Mammary epithelial cell (primary cell): ENCODE measurements at regions of chr12 and their contacts with region 1.

Region 1: GRCh38 chr12:6825398-6826124 is 2.6 kb upstream of the P3H3 start:
- DNase-seq: peak; percentile 71
- H3K4me3 ChIP-seq: peak overlapping the region in 2 of 3 experiments; percentile 29 to 30
- H3K27ac ChIP-seq: no peak overlapping the region
- H3K4me1 ChIP-seq: peaks cover 22% of the 10 kb centered on the region
- H3K27me3 ChIP-seq: peaks cover 29% of the 10 kb centered on the region
- CTCF ChIP-seq: peak; percentile 80 to 95

Region 2: GRCh38 chr12:6662906-6663742 is 162.4 kb before region 1 on chr12 and contains the start of gene ING4:
- CTCF ChIA-PET with region 1: no interaction called
- dilution Hi-C with region 1: no loop called
- in situ Hi-C with region 1: no loop called
- intact Hi-C with region 1: loop called (anchors 5 kb)
- DNase-seq: peak; percentile 99
- H3K4me3 ChIP-seq: peak within 1 kb of the TSS; percentile 67 to 71 (median 69)
- H3K27ac ChIP-seq: peak within 1 kb of the TSS; percentile 44
- H3K4me1 ChIP-seq: peaks cover 8% of the 10 kb centered on the region
- H3K27me3 ChIP-seq: no peaks in the 10 kb centered on the region
- CTCF ChIP-seq: no peak
- total RNA-seq, gene ING4: 14.8 to 34.8 TPM

Region 3: DNA sequence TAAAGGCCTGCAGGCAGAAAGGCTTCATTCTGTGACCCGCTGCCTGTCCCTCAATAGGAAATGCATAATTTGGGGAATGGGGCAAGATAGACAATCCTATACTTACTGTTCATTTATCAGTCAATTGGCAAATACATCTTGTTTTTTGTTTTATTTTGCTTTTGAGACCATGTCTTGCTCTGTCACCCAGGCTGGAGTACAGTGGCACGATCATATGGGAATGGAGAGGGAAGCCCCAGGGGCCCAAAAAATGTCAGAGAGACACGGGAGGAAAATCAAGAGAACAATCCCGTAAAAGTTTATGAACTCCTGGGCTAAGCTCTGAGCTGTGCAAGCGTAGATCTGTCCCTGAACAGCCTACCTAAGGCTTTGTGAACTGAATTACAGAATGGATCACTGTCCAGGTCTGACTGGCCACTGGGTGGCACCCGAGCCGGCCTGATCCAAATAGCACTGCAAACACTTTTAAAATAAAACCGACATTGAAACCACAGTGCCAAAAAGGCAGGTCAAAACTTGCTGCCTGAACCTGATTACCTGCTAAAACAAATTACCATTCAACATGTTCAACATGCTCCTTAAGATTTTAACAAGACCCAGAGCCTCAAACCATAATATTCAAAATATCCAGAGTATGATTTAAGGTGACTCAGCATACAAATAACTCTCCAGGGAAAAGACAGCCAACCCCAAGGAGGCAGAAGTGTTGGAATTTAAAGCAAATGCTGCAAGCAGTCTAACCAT is 89.9 kb before region 1 on chr12:
- CTCF ChIA-PET with region 1: no interaction called
- dilution Hi-C with region 1: loop called (anchors 5 kb)
- in situ Hi-C with region 1: loop called in 1 of 2 experiments (anchors 10 kb)
- intact Hi-C with region 1: loop called (anchors 1 kb)
- DNase-seq: peak; percentile 97
- H3K4me3 ChIP-seq: no peak overlapping the region
- H3K27ac ChIP-seq: peak overlapping the region; percentile 7
- H3K4me1 ChIP-seq: peaks cover 13% of the 10 kb centered on the region
- H3K27me3 ChIP-seq: no peaks in the 10 kb centered on the region
- CTCF ChIP-seq: peak; percentile 76 to 81

Region 4: DNA sequence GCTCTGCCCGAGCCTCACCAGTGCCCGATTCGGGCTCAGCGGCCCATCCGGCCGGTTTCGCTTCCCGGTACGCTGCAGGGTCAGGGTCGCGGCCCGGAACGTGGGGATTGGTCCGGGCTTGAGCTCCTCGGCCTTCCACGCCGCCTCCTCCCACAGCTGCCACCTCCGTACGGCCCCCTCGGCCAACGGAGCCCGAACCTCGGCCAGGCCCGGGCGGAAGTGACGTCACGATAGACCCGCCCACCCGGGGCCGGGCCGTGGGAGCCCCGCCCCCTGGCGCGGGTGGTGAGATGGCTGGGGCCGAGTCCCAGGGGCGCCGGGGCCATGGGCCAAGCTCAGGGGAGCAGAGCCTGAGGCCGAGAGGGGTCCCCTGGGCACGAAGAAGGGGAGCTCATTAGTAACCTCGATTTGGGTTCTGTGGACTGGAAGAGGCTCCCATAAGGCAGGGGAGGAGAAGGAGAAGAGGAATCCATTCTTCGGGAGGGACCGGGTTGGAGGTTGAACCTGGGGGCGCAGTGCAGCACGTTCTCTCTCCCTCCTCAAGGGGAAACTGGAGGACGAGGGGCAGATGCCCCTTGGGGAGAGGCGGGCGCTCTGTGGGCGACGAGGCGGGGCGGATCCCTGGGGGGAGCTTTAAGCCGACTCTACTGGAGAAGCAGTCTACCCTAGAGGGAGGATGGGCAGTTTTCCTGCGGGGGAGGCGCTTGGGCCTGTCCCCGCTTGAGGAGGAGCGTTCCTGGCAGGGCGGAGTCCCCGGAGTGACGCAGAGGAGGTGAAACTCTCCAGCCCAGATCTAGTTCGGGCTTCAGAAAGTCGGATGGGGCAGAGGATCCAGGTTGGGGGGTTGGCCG is 72.4 kb before region 1 on chr12 and contains the start of gene MLF2:
- CTCF ChIA-PET with region 1: interaction called, 6 read pairs
- dilution Hi-C with region 1: no loop called
- in situ Hi-C with region 1: loop called (anchors 5 to 10 kb)
- intact Hi-C with region 1: loop called (anchors 1 kb)
- DNase-seq: peak; percentile 98
- H3K4me3 ChIP-seq: peak within 1 kb of the TSS; percentile 49 to 99 (median 81)
- H3K27ac ChIP-seq: peak within 1 kb of the TSS; percentile 92
- H3K4me1 ChIP-seq: peaks cover 24% of the 10 kb centered on the region
- H3K27me3 ChIP-seq: no peaks in the 10 kb centered on the region
- CTCF ChIP-seq: peak; percentile 82 to 97
- total RNA-seq, gene MLF2: 233 to 294 TPM

Region 5: GRCh38 chr12:6778574-6779550 is 46.7 kb before region 1 on chr12:
- CTCF ChIA-PET with region 1: no interaction called
- dilution Hi-C with region 1: no loop called
- in situ Hi-C with region 1: no loop called
- intact Hi-C with region 1: loop called (anchors 1 kb)
- DNase-seq: peak; percentile 82
- H3K4me3 ChIP-seq: peak overlapping the region in 2 of 3 experiments; percentile 25 to 31
- H3K27ac ChIP-seq: no peak overlapping the region
- H3K4me1 ChIP-seq: peaks cover 7% of the 10 kb centered on the region
- H3K27me3 ChIP-seq: no peaks in the 10 kb centered on the region
- CTCF ChIP-seq: peak; percentile 81 to 97

Region 6: GRCh38 chr12:6788972-6789924 is 36.3 kb before region 1 on chr12 and contains the start of gene CD4:
- CTCF ChIA-PET with region 1: no interaction called
- dilution Hi-C with region 1: no loop called
- in situ Hi-C with region 1: no loop called
- intact Hi-C with region 1: no loop called
- DNase-seq: no peak
- H3K4me3 ChIP-seq: no peak within 1 kb of the TSS
- H3K27ac ChIP-seq: no peak within 1 kb of the TSS
- H3K4me1 ChIP-seq: peaks cover 4% of the 10 kb centered on the region
- H3K27me3 ChIP-seq: no peaks in the 10 kb centered on the region
- CTCF ChIP-seq: no peak
- total RNA-seq, gene CD4: 0.17 to 1.8 TPM

Region 7: DNA sequence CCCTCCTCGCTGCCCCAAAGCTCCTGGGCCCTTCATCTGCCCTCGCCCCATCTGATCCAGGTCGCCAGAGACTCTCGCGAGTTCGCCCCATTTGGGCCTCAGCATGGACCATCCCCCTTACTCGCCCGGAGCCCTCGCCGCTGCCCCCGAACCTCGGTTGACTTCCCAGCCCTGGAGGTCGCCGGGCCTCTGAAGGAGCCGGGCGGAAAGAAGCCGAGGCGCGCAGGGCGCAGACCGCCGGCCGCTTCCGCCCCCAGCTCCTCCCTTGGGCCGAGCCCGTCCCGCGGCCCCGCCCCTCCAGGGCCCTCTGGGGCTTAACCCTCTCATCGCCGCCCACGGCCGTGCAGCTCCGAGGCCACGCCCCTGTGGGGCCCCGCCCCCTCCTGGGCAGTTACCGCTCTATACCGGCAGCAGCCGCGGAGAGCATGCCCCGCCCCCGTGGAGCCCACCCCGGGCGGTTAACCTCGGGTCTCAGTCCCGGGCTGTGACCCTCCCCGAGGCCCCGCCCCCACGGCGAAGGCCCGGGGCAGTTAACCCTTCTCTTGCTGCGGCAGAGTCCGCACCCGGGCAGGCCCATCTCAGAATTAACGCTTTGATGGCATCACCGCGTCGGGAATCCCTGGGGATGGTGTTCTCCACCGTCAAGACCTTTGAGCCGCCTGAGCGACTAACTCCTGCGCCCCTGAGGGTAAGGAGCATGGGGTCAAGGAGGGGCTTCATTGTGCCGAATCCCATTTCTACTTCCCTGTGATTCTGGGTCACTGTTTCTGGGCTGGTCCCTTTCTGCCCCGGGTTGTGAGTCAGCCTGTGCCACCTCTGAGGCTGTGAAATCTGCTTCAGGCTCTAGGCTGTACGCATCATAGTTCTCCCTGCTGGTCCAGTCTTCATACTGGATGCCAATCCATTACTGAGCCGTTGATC is 47.8 kb after region 1 on chr12 and contains the start of gene SPSB2:
- CTCF ChIA-PET with region 1: interaction called, 7 read pairs
- dilution Hi-C with region 1: no loop called
- in situ Hi-C with region 1: no loop called
- intact Hi-C with region 1: loop called (anchors 2 kb)
- DNase-seq: peak; percentile 89
- H3K4me3 ChIP-seq: peak within 1 kb of the TSS; percentile 68 to 88 (median 84)
- H3K27ac ChIP-seq: peak within 1 kb of the TSS; percentile 56
- H3K4me1 ChIP-seq: peaks cover 45% of the 10 kb centered on the region
- H3K27me3 ChIP-seq: no peaks in the 10 kb centered on the region
- CTCF ChIP-seq: no peak
- total RNA-seq, gene SPSB2: 7.8 to 9.8 TPM

Region 8: GRCh38 chr12:7079826-7080125 is 254.2 kb after region 1 on chr12:
- CTCF ChIA-PET with region 1: no interaction called
- dilution Hi-C with region 1: no loop called
- in situ Hi-C with region 1: no loop called
- intact Hi-C with region 1: no loop called
- DNase-seq: peak; percentile 82
- H3K4me3 ChIP-seq: peak overlapping the region in 2 of 3 experiments; percentile 19
- H3K27ac ChIP-seq: peak overlapping the region; percentile 83
- H3K4me1 ChIP-seq: peaks cover 7% of the 10 kb centered on the region
- H3K27me3 ChIP-seq: no peaks in the 10 kb centered on the region
- CTCF ChIP-seq: no peak